ENCODE measurements at regions of chr11 and their contacts with region 1.

Region 1: GRCh38 chr11:129440028-129440713 is 64.5 kb downstream of the BARX2 start:
- DNase-seq: no peak
- ATAC-seq: no peak
- H3K4me3 ChIP-seq: no peak overlapping the region
- H3K4me3 Mint-ChIP-seq: no peak overlapping the region
- H3K27ac ChIP-seq: no peak overlapping the region
- H3K27ac Mint-ChIP-seq: no peak overlapping the region
- H3K4me1 ChIP-seq: no peaks in the 10 kb centered on the region
- H3K4me1 Mint-ChIP-seq: peaks cover 0 to 7% (median 4%) of the 10 kb centered on the region in 3 donors
- H3K27me3 ChIP-seq: peaks cover 0 to 14% of the 10 kb centered on the region in 2 experiments
- H3K27me3 Mint-ChIP-seq: peaks cover 6 to 9% of the 10 kb centered on the region in 2 donors

Region 2: DNA sequence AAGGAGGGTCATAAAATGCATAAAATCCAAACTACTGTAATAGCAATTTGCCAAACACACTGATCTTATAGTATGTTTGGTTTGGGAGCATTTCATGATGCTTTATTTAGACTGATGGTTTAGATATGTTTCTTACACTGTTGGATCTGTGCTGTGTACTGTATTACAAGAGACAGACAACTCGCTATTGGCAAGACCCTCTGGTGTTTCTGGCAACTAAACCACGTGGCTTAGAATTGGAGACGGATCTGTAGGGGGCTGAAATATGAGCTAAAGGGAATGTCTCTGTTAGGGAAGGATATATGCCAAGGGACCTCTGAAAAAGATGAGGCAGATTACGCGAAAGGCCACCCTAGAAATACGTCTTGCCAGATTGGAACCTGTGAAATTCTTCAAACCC is 144.1 kb after region 1 on chr11:
- CTCF ChIA-PET with region 1: interaction called in 1 of 2 experiments, 11 read pairs
- POLR2A ChIA-PET with region 1: no interaction called
- DNase-seq: no peak
- ATAC-seq: no peak
- H3K4me3 ChIP-seq: no peak overlapping the region
- H3K4me3 Mint-ChIP-seq: no peak overlapping the region
- H3K27ac ChIP-seq: no peak overlapping the region
- H3K27ac Mint-ChIP-seq: no peak overlapping the region
- H3K4me1 ChIP-seq: no peaks in the 10 kb centered on the region
- H3K4me1 Mint-ChIP-seq: no peaks in the 10 kb centered on the region
- H3K27me3 ChIP-seq: no peaks in the 10 kb centered on the region
- H3K27me3 Mint-ChIP-seq: peaks cover 1 to 11% of the 10 kb centered on the region in 2 donors

Region 3: DNA sequence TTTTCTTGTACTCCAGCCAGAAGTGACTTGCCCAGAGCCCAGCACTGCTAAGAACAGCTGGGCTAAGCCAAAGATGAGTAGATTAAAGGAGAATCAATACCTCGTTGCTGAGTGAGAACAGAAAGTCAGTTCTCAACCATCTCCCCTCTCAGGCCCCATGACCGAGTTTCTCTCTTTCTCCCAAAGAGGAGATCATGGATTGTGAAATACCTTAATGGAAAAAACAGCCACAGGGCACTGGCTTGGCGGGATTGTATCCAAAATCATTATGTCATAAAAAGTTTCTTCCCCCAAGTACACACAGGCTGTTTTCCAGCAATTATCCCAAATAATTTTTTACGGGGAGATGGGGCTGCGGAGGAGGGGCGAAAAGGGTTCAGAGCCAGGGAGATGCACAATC is 263.7 kb after region 1 on chr11:
- CTCF ChIA-PET with region 1: no interaction called
- POLR2A ChIA-PET with region 1: no interaction called
- DNase-seq: no peak
- ATAC-seq: no peak
- H3K4me3 ChIP-seq: no peak overlapping the region
- H3K4me3 Mint-ChIP-seq: no peak overlapping the region
- H3K27ac ChIP-seq: no peak overlapping the region
- H3K27ac Mint-ChIP-seq: no peak overlapping the region
- H3K4me1 ChIP-seq: no peaks in the 10 kb centered on the region
- H3K4me1 Mint-ChIP-seq: no peaks in the 10 kb centered on the region
- H3K27me3 ChIP-seq: peaks cover 0 to 5% of the 10 kb centered on the region in 2 experiments
- H3K27me3 Mint-ChIP-seq: peaks cover 0 to 16% of the 10 kb centered on the region in 2 donors

Measured in T-cell (primary cell).